Posterior vena cava (tissue), 2 donors: ENCODE measurements at regions of chr2 and their contacts with region 1.

Region 1: DNA sequence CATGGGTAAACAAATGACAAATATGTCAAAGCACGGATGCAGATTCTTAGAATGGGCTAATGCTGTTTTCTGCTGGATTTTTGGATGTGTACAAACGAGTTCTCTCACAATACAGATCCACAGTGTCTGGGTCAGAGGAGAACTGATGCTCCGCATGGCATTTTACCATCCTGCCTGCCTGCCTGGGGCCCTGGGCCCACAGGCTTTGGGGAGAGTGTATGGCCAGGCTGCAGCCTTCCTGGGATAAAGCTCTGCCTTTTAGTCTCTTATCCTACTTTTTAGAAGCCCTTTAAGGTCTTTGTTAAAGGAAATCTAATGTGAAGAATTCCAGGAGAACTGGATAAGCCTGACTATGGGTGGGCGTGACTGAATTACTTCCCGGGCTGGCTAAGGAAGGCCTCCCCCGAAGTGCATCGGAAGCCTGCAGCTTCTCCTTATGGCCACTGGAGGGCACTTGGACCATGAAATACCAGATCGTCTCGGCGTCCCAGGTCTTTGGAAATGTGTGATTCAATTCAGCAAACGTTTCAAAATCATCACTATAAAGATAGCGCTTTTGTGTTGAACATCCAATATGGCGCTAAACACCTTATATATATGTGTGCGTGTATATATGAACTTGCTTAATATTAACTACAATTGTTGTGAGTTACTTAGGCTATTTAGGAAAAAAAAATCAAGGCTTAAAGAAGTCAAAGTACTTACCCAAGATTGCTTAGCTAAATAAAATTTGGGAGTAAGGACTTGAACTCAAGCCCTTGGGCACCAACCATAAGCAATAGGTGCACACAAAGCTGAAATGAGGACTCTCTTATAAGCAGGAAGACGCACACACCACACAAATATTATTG is 15.2 kb upstream of the DNPEP start:
- DNase-seq: peak; percentile 85

Region 2: DNA sequence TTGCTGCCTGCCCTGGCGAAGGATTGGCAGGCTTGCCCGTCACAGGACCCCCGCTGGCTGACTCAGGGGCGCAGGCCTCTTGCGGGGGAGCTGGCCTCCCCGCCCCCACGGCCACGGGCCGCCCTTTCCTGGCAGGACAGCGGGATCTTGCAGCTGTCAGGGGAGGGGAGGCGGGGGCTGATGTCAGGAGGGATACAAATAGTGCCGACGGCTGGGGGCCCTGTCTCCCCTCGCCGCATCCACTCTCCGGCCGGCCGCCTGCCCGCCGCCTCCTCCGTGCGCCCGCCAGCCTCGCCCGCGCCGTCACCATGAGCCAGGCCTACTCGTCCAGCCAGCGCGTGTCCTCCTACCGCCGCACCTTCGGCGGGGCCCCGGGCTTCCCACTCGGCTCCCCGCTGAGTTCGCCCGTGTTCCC is 15.3 kb after region 1 on chr2 and contains the start of gene DES:
- intact Hi-C with region 1: loop called in 1 of 2 experiments (anchors 2 kb)
- DNase-seq: no peak
- total RNA-seq, gene DES: 6,561 to 7,652 TPM

Region 3: DNA sequence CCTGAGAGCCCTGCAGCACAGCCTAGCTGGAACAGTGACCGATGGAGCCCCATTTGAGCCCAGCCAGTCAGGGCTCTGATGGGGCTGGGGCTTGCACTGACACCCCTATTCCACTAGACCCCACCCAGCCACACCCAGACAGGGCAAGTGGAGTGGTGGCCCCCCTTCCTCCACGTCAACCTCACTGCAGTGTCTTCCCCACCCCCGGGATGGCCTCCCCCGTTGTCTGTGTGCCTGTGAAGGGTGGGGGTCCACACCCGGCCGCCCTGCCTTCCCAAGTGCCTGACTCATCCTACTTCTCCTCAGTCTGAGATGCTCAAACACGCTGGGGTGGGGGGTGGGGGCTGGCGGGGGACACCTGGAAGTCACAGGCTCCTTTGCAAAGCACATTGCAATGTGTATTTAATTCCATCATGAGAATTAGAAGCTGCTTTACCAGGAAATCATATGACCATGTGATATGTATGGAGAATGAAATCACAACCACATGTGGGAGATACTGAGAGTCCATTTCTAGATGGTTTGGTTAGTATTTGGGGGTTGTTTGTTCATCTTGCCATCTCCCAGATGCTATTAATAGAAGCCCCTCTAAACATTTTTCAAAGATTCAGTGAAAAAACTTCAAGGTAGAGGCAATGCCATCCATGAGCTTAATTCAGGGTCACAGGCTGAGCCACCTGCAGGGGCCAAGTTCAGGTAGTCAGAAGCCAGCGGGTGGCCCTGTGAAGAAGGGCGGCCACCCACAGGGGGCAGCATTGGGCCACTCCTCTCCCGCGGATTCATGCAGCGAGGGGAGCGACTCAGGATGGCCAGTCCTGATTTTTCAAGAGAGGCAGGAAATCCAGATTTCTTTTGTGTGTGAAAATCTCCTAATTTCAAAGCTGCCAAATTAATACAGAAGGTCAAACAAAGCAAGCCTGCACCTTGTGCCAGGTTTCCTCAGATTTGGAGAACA is 73.1 kb after region 1 on chr2:
- intact Hi-C with region 1: loop called in 1 of 2 experiments (anchors 10 kb)
- DNase-seq: peak; percentile 91

Region 4: GRCh38 chr2:219530048-219530963 is 127.4 kb after region 1 on chr2:
- intact Hi-C with region 1: loop called (anchors 2 to 5 kb)
- DNase-seq: peak; percentile 95